ENCODE measurements at regions of chr4 and their contacts with region 1.

Region 1: DNA sequence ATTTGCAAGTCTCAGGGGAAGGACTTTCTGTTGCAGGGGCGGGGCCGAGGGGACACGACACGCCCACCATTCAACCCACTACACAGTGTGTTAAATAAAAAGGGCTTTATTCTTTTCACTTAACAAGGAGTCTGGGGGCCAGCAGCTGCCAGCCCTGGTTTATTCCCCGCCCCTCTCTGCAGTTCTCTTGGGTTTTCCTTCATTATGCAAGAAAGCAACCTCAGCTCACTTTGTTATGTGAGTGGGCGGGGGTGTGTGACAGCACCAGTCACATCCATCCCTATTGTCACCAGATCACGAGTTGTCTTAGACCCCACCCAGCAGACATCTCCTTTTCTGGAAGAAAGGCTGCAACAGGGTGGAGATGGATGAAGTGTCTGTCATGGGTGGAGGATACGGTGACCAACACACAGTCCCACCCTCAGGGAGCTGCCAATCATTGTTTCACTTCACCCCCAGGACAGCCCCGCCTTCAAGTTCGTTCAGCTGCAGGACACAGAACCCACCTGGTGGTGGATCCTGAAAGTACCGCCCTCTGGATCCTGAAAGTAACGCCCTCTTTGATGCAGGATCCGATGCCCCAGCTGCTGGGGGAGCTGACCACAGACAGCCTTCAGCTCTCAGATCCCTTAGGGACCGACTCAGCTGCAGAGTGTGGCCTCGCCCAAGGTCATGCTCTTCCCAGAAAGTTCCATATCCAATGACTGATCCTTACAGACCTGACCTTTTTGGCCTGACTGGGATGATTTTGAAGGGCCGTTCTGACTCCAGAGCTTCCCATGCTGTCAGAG is 79.6 kb downstream of the SMIM20 start:
- DNase-seq: peak in 2 of 9 experiments; percentile 8 to 20
- ATAC-seq: no peak
- H3K4me3 ChIP-seq: no peak overlapping the region
- H3K4me3 Mint-ChIP-seq: no peak overlapping the region
- H3K27ac ChIP-seq: no peak overlapping the region
- H3K27ac Mint-ChIP-seq: no peak overlapping the region
- H3K4me1 ChIP-seq: no peaks in the 10 kb centered on the region
- H3K4me1 Mint-ChIP-seq: peaks cover 3% of the 10 kb centered on the region
- H3K27me3 ChIP-seq: peaks cover 0 to 2% of the 10 kb centered on the region in 2 experiments
- H3K27me3 Mint-ChIP-seq: no peaks in the 10 kb centered on the region
- CTCF ChIP-seq: no peak

Region 2: GRCh38 chr4:25834411-25835107 is 159.0 kb before region 1 on chr4:
- CTCF ChIA-PET with region 1: no interaction called
- POLR2A ChIA-PET with region 1: no interaction called
- intact Hi-C with region 1: no loop called
- DNase-seq: no peak
- ATAC-seq: no peak
- H3K4me3 ChIP-seq: no peak overlapping the region
- H3K4me3 Mint-ChIP-seq: no peak overlapping the region
- H3K27ac ChIP-seq: no peak overlapping the region
- H3K27ac Mint-ChIP-seq: no peak overlapping the region
- H3K4me1 ChIP-seq: no peaks in the 10 kb centered on the region
- H3K4me1 Mint-ChIP-seq: peaks cover 23% of the 10 kb centered on the region
- H3K27me3 ChIP-seq: no peaks in the 10 kb centered on the region
- H3K27me3 Mint-ChIP-seq: no peaks in the 10 kb centered on the region
- CTCF ChIP-seq: no peak

Region 3: GRCh38 chr4:26005764-26006163 is 12.2 kb after region 1 on chr4:
- CTCF ChIA-PET with region 1: interaction called, 23 read pairs
- POLR2A ChIA-PET with region 1: interaction called, 3 read pairs
- intact Hi-C with region 1: no loop called
- DNase-seq: no peak
- ATAC-seq: no peak
- H3K4me3 ChIP-seq: no peak overlapping the region
- H3K4me3 Mint-ChIP-seq: no peak overlapping the region
- H3K27ac ChIP-seq: no peak overlapping the region
- H3K27ac Mint-ChIP-seq: no peak overlapping the region
- H3K4me1 ChIP-seq: no peaks in the 10 kb centered on the region
- H3K4me1 Mint-ChIP-seq: no peaks in the 10 kb centered on the region
- H3K27me3 ChIP-seq: no peaks in the 10 kb centered on the region
- H3K27me3 Mint-ChIP-seq: peaks cover 9% of the 10 kb centered on the region
- CTCF ChIP-seq: no peak

Region 4: GRCh38 chr4:26058537-26058936 is 64.9 kb after region 1 on chr4:
- CTCF ChIA-PET with region 1: no interaction called
- POLR2A ChIA-PET with region 1: no interaction called
- intact Hi-C with region 1: no loop called
- DNase-seq: no peak
- ATAC-seq: no peak
- H3K4me3 ChIP-seq: no peak overlapping the region
- H3K4me3 Mint-ChIP-seq: no peak overlapping the region
- H3K27ac ChIP-seq: no peak overlapping the region
- H3K27ac Mint-ChIP-seq: no peak overlapping the region
- H3K4me1 ChIP-seq: no peaks in the 10 kb centered on the region
- H3K4me1 Mint-ChIP-seq: peaks cover 3% of the 10 kb centered on the region
- H3K27me3 ChIP-seq: no peaks in the 10 kb centered on the region
- H3K27me3 Mint-ChIP-seq: peaks cover 4% of the 10 kb centered on the region
- CTCF ChIP-seq: no peak

Region 5: GRCh38 chr4:26418107-26418506 is 424.5 kb after region 1 on chr4:
- CTCF ChIA-PET with region 1: interaction called, 42 read pairs
- POLR2A ChIA-PET with region 1: no interaction called
- intact Hi-C with region 1: no loop called
- DNase-seq: no peak
- ATAC-seq: no peak
- H3K4me3 ChIP-seq: no peak overlapping the region
- H3K4me3 Mint-ChIP-seq: no peak overlapping the region
- H3K27ac ChIP-seq: no peak overlapping the region
- H3K27ac Mint-ChIP-seq: no peak overlapping the region
- H3K4me1 ChIP-seq: no peaks in the 10 kb centered on the region
- H3K4me1 Mint-ChIP-seq: no peaks in the 10 kb centered on the region
- H3K27me3 ChIP-seq: no peaks in the 10 kb centered on the region
- H3K27me3 Mint-ChIP-seq: no peaks in the 10 kb centered on the region
- CTCF ChIP-seq: no peak

Measured in CD8-positive, alpha-beta T cell (primary cell).